MCF 10A (cell line): ENCODE measurements at regions of chr20 and their contacts with region 1.

Region 1: GRCh38 chr20:52972190-52972937 is at the start of gene TSHZ2:
- DNase-seq: peak; percentile 31
- H3K4me3 Mint-ChIP-seq: peak within 1 kb of the TSS; percentile 92
- H3K27ac Mint-ChIP-seq: peak within 1 kb of the TSS; percentile 52
- H3K4me1 Mint-ChIP-seq: peaks cover 23% of the 10 kb centered on the region
- H3K27me3 Mint-ChIP-seq: no peaks in the 10 kb centered on the region
- CTCF ChIP-seq: no peak
- total RNA-seq, gene TSHZ2: 1.6 and 2.3 TPM in 2 replicates

Region 2: DNA sequence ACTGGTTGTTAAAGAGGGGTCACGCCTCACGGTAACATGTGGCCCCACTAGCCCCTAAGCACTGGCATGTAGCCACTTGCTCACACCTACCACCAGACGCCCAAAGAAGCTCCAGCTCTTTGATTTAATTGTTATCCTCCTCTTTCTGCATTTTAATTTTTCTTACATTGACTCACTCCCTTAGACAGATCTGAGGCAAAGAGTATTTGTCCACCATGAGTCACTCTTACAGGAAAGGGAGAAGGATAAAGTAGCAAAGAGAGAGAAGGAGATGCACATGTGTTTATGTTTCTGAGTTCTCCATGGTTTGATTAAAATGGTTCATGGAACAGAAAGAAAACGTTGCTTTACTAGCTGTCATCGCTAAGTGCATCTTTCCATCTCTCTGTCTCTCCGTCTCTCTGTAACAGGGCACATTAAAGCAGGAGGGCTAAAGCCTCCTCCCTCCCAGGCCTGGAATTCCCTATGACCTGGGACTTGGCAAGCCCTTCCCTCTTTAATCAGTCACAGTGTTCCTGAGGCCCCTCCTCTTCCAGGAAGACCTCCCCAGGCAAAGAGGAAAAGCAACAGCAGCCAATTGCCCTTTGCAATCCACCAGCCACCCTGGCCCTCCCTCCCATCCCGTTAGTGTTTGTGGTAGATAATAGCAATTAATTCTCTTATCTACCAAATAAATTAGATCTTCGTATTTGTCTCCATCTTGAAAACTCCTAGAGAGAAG is 113.0 kb before region 1 on chr20:
- CTCF ChIA-PET with region 1: no interaction called
- POLR2A ChIA-PET with region 1: no interaction called
- intact Hi-C with region 1: loop called (anchors 10 kb)
- DNase-seq: peak; percentile 43
- H3K4me3 Mint-ChIP-seq: no peak overlapping the region
- H3K27ac Mint-ChIP-seq: no peak overlapping the region
- H3K4me1 Mint-ChIP-seq: peaks cover 6% of the 10 kb centered on the region
- H3K27me3 Mint-ChIP-seq: no peaks in the 10 kb centered on the region
- CTCF ChIP-seq: no peak

Region 3: GRCh38 chr20:52943185-52943841 is 29.1 kb before region 1 on chr20:
- CTCF ChIA-PET with region 1: interaction called, 6 read pairs
- POLR2A ChIA-PET with region 1: interaction called, 30 read pairs
- intact Hi-C with region 1: loop called (anchors 2 kb)
- DNase-seq: peak; percentile 88
- H3K4me3 Mint-ChIP-seq: peak overlapping the region; percentile 5
- H3K27ac Mint-ChIP-seq: peak overlapping the region; percentile 70
- H3K4me1 Mint-ChIP-seq: peaks cover 38% of the 10 kb centered on the region
- H3K27me3 Mint-ChIP-seq: no peaks in the 10 kb centered on the region
- CTCF ChIP-seq: no peak

Region 4: GRCh38 chr20:53080969-53081871 is 108.9 kb after region 1 on chr20:
- CTCF ChIA-PET with region 1: interaction called, 9 read pairs
- POLR2A ChIA-PET with region 1: interaction called, 34 read pairs
- intact Hi-C with region 1: loop called (anchors 2 kb)
- DNase-seq: peak; percentile 82
- H3K4me3 Mint-ChIP-seq: peak overlapping the region; percentile 59
- H3K27ac Mint-ChIP-seq: peak overlapping the region; percentile 90
- H3K4me1 Mint-ChIP-seq: peaks cover 16% of the 10 kb centered on the region
- H3K27me3 Mint-ChIP-seq: no peaks in the 10 kb centered on the region
- CTCF ChIP-seq: no peak

Region 5: GRCh38 chr20:53216856-53217576 is 244.7 kb after region 1 on chr20:
- CTCF ChIA-PET with region 1: interaction called, 13 read pairs
- POLR2A ChIA-PET with region 1: interaction called, 4 read pairs
- intact Hi-C with region 1: no loop called
- DNase-seq: peak; percentile 54
- H3K4me3 Mint-ChIP-seq: peak overlapping the region; percentile 30
- H3K27ac Mint-ChIP-seq: no peak overlapping the region
- H3K4me1 Mint-ChIP-seq: no peaks in the 10 kb centered on the region
- H3K27me3 Mint-ChIP-seq: no peaks in the 10 kb centered on the region
- CTCF ChIP-seq: peak; percentile 89